Right cardiac atrium (tissue), 5 donors: ENCODE measurements at regions of chr14 and their contacts with region 1.

Region 1: DNA sequence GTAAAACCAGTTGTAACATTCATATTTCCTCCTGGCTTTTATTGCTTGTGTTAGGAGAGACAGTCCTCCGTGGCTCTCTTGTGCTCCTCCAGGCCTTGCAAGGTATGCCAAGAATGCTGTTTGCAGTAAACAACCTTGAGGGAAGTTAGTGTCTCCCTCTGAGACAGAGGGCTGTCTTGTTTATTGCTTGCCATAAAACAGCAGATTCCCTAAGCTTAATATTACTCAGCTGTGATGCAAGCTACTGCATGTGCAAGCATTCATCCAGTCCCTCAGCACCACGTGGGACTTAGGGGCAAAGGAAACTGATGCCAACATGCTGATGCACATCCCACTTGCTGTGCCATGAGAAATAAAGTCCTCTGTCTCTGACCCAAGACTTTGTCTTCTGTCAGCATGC is 6.6 kb downstream of the POMT2 start:
- DNase-seq: no peak
- ATAC-seq: no peak
- H3K4me3 ChIP-seq: no peak overlapping the region
- H3K27ac ChIP-seq: no peak overlapping the region
- H3K4me1 ChIP-seq: peaks cover 8% of the 10 kb centered on the region
- H3K27me3 ChIP-seq: no peaks in the 10 kb centered on the region

Region 2: DNA sequence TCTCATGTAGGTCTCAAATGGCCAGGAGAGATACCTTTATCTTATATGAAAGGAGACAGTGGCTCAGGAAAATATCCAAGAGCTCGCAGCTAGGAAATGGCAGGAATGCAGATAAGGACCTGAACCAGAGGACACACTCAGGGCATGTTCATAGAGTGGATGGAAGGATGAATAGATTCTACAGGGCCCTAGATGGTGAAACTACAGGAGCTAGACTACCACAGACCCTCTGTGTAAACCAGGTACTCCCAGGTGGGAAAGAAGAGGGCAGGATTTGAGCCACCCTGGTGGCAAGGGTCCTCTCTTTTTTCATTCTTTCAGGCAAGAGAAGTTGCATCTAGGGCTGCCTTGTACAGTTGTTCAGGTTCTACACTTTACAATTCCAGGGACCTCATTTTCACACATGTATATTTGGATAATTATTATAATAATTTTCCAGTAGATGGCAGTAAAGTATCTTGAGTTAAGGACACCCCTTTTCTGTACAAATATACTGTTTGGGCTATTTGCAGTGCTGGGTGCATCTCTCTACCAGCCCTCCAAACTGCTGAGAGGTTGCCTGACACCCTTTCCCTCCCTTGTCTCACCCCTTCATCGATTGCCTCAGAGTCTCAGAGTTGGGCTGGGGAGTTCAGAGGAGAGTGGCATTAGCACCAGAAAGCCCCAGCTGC is 162.0 kb before region 1 on chr14:
- intact Hi-C with region 1: loop called in 3 of 4 experiments (anchors 5 to 10 kb)
- DNase-seq: no peak
- ATAC-seq: peak in 1 of 2 donors; percentile 21
- H3K4me3 ChIP-seq: no peak overlapping the region
- H3K27ac ChIP-seq: no peak overlapping the region
- H3K4me1 ChIP-seq: peaks cover 2% of the 10 kb centered on the region
- H3K27me3 ChIP-seq: no peaks in the 10 kb centered on the region

Region 3: GRCh38 chr14:77390188-77390587 is 76.1 kb after region 1 on chr14:
- intact Hi-C with region 1: no loop called
- DNase-seq: no peak
- ATAC-seq: no peak
- H3K4me3 ChIP-seq: no peak overlapping the region
- H3K27ac ChIP-seq: no peak overlapping the region
- H3K4me1 ChIP-seq: no peaks in the 10 kb centered on the region
- H3K27me3 ChIP-seq: no peaks in the 10 kb centered on the region

Region 4: DNA sequence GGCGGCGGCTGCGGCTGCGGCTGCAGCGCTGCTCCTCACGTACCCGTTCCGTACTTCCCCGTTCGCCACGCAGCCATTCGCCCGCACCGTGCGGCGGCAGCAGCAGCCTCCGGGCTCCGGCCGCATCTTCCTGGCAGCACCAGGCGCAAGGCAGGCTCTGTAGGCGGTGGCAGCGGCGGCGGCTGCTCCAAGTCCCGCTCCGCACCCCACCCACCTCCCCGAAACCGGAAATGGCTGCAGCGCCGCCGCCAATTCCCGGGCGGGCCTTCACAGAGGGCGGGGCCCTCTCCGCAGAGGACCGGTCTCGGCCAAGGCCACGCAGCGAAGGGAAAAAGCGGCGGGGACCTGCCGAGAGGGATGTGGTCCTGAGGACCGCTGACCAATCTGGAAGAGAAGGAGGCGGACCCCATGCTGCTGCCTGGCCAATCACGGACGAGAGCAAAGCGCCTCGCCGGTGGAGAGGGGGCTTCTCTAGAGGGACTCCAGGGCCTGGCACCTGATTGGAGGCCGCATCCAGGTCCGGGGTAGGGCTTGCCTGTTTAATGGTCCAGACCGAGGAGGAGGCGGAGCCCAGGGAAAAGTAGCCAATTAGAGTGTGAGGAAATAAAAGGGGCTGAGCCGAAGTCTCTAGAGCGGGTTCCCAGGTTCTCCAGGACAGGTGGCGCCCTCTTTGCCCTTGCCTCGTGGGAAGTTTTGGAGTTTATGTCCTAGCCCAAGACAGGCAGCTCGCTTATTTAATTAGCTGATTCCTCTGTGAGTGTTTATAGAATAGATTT is 302.6 kb after region 1 on chr14 and contains the start of gene SPTLC2:
- intact Hi-C with region 1: no loop called
- DNase-seq: peak; percentile 99
- ATAC-seq: peak; percentile 99
- H3K4me3 ChIP-seq: peak within 1 kb of the TSS; percentile 81
- H3K27ac ChIP-seq: peak within 1 kb of the TSS; percentile 65
- H3K4me1 ChIP-seq: no peaks in the 10 kb centered on the region
- H3K27me3 ChIP-seq: no peaks in the 10 kb centered on the region
- total RNA-seq, gene SPTLC2: 10.7 to 15.8 (median 13.0) TPM